Activated B cell treated with CpG ODN at 0.5 μM for 24 hours (primary cell): ENCODE measurements at regions of chr22 and their contacts with region 1.

Region 1: GRCh38 chr22:24525416-24526037 is 29.4 kb downstream of the GUCD1 start:
- DNase-seq: peak; percentile 66
- ATAC-seq: peak; percentile 90
- H3K4me3 Mint-ChIP-seq: no peak overlapping the region
- H3K27ac Mint-ChIP-seq: no peak overlapping the region
- H3K4me1 Mint-ChIP-seq: peaks cover 14% of the 10 kb centered on the region
- H3K27me3 Mint-ChIP-seq: no peaks in the 10 kb centered on the region
- CTCF ChIP-seq: peak; percentile 87

Region 2: DNA sequence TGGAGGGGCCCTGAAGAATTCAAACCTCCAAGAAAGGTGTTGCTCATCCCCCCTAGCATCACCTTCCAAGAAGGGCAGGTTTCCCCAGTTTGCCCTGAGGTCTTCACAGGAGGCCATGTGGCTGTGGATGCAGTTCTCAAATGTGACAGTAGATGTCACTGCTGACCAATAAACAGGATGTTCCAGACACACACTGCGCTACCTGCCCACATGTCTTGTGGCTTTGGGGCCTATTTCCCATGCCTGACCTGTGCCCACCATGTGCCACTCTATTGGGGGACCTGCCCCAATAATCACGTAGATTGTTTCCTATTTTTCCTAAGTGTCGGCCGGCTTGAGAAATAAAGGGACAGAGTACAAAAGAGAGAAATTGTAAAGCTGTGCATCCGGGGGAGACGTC is 541.1 kb before region 1 on chr22:
- CTCF ChIA-PET with region 1: no interaction called
- POLR2A ChIA-PET with region 1: no interaction called
- intact Hi-C with region 1: loop called (anchors 10 kb)
- DNase-seq: no peak
- ATAC-seq: peak; percentile 91
- H3K4me3 Mint-ChIP-seq: no peak overlapping the region
- H3K27ac Mint-ChIP-seq: no peak overlapping the region
- H3K4me1 Mint-ChIP-seq: no peaks in the 10 kb centered on the region
- H3K27me3 Mint-ChIP-seq: no peaks in the 10 kb centered on the region
- CTCF ChIP-seq: no peak

Region 3: DNA sequence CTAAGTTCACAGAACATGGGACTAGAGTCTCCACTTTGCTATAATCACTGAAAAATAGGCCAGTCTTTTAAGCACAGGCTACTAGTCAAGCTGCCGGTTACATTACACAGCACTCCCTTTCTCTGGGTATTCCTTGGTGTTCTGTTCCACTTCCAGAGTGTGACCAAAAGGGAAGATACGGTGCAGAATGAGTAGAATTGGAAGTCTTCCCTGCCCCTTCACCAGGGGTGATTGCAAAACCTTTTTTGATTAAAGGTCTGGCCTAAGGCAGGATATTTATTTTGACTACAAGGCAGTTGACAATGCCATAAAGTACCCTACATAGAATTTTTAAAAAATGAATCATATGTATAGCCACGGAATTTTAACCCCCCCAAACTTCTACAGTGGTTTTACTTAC is 157.7 kb before region 1 on chr22:
- CTCF ChIA-PET with region 1: no interaction called
- POLR2A ChIA-PET with region 1: no interaction called
- intact Hi-C with region 1: no loop called
- DNase-seq: no peak
- ATAC-seq: no peak
- H3K4me3 Mint-ChIP-seq: no peak overlapping the region
- H3K27ac Mint-ChIP-seq: no peak overlapping the region
- H3K4me1 Mint-ChIP-seq: no peaks in the 10 kb centered on the region
- H3K27me3 Mint-ChIP-seq: no peaks in the 10 kb centered on the region
- CTCF ChIP-seq: no peak

Region 4: DNA sequence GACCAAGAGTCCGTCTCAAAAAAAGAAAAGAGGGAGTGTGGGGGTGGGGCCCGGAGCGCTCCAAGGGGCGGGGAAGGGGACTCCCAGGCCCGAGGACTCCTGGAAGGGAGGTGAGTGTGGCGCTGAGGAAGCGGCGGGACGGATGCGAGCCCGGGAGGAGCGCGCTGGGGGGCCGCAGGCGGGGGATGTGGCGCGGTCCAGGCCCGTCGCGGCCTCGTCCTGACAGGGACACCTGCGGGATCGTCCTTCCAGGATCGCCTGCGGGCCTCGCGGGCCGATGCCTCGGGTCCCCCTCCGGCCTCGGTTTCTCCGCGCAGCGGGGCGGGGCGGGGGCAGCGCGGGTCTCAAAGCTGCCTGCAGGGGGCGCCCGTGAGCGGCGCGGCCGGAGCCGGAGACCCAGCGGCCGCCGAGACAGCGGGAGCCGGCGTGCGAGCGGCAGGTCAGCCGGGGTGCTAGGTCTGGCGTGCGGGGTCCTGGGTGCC is 102.0 kb before region 1 on chr22:
- CTCF ChIA-PET with region 1: interaction called, 22 read pairs
- POLR2A ChIA-PET with region 1: interaction called, 5 read pairs
- intact Hi-C with region 1: loop called (anchors 1 kb)
- DNase-seq: peak; percentile 85
- ATAC-seq: peak; percentile 26
- H3K4me3 Mint-ChIP-seq: peak overlapping the region; percentile 68
- H3K27ac Mint-ChIP-seq: peak overlapping the region; percentile 24
- H3K4me1 Mint-ChIP-seq: peaks cover 47% of the 10 kb centered on the region
- H3K27me3 Mint-ChIP-seq: no peaks in the 10 kb centered on the region
- CTCF ChIP-seq: peak; percentile 24

Region 5: DNA sequence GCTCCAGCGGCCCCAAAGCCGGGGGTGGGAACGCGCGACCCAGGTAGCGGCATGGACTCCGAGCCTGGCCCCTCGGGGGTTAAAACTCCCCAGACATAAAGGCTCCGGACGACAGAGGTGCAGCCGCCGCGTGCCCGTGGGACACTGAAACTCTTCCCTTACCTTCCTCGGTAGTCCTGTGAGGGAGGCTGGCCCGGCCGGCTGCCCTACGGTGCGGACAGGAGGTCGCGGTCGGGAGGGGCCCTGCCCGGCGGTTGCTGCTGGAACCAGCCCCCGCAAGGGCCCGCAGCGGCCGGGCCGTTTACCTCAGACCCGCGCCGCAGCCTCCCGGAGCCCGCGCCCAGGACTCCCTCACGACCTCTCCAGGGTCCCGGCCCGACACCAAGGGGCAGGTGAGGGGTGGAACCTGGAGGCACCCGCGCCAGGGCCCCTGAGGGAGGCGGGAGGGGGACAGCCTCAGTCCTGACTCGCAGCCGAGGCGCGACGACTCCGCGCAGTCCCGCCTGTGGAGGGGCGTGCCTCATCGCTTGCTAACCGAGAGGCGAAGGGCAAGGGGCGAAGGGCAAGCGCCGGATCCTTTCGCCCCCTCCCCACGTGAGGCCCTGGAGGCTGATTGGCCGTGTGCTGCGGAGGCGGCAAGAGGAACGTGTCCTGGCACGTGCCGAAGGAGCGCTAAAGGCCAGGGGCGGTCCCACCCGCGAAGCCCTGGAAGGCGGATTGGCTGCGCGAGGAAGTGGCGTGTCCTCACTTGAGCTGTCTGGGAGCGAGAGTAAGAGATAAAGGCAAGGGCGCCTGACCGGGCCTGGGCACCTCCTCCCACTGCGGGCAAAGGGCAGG is 30.8 kb before region 1 on chr22 and contains the start of gene UPB1:
- CTCF ChIA-PET with region 1: interaction called, 3 read pairs
- POLR2A ChIA-PET with region 1: interaction called, 10 read pairs
- intact Hi-C with region 1: no loop called
- DNase-seq: no peak
- ATAC-seq: no peak
- H3K4me3 Mint-ChIP-seq: no peak within 1 kb of the TSS
- H3K27ac Mint-ChIP-seq: no peak within 1 kb of the TSS
- H3K4me1 Mint-ChIP-seq: no peaks in the 10 kb centered on the region
- H3K27me3 Mint-ChIP-seq: peaks cover 17% of the 10 kb centered on the region
- CTCF ChIP-seq: no peak
- total RNA-seq, gene UPB1: 1.1 and 1.3 TPM in 2 replicates

Region 6: DNA sequence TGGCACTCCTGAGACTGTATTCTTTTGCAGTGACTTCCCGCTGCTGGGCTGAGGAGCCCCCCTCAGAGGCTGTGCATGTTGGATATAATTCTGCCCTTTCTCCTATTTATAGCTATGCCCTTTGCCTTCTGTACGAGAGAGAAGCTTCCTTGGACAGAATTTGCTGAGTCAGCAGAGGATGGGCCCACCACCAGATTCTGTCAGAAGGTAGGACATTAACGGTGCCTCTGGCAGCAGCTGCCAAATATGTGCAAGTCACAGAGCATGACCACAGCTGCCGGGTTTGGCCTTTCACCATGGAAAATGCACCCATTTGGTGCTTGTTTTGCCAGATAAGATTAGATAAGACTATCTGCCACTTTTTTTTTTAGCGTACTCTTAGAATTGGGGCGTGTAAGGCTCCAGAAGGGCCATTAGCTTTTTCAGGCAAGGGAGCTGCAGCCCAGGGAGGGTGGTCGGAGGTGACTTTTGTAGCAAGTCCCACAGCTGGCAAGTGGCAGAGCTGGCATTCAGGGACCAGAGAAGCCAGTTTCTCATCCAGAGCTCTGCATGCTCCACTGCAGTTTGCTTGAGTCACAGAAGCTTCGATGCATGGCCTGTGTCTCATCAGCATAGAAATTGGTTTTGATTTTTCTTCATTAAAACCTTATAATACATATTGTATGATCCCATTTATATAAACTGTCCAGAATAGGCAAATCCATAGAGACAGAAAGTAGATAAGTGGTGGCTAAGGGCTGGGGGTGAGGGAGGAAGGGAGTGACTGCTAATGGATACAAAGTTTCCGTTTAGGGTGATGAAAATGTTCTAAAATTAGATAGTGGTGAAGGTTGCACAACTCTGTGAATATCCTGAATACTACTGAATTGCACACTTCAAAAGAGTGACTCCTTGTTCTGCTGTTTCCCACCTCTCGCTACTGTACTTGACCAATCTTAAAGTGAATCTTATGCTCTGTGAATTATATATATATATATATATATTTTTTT is 14.6 kb before region 1 on chr22:
- CTCF ChIA-PET with region 1: interaction called, 12 read pairs
- POLR2A ChIA-PET with region 1: interaction called, 6 read pairs
- intact Hi-C with region 1: loop called (anchors 1 kb)
- DNase-seq: no peak
- ATAC-seq: peak; percentile 60
- H3K4me3 Mint-ChIP-seq: peak overlapping the region; percentile 45
- H3K27ac Mint-ChIP-seq: peak overlapping the region; percentile 67
- H3K4me1 Mint-ChIP-seq: peaks cover 61% of the 10 kb centered on the region
- H3K27me3 Mint-ChIP-seq: no peaks in the 10 kb centered on the region
- CTCF ChIP-seq: no peak